K562 (cell line): ENCODE measurements at regions of chr1 and their contacts with region 1.

Region 1: GRCh38 chr1:157992031-157992832 is 1.2 kb upstream of the KIRREL1 start:
- DNase-seq: peak; percentile 58 to 67 (median 64)
- ATAC-seq: peak; percentile 90
- H3K4me3 ChIP-seq: no peak overlapping the region
- H3K27ac ChIP-seq: no peak overlapping the region
- H3K4me1 ChIP-seq: no peaks in the 10 kb centered on the region; a peak in 1 of 5 replicates
- H3K27me3 ChIP-seq: peaks cover 8 to 24% of the 10 kb centered on the region in 2 experiments; a peak in 3 of 5 replicates
- CTCF ChIP-seq: peak; percentile 81 to 88 (median 86)
- EP300 ChIP-seq: no peak
- POLR2A ChIP-seq: no peak
- RAD21 ChIP-seq: peak; percentile 80 to 87

Region 2: DNA sequence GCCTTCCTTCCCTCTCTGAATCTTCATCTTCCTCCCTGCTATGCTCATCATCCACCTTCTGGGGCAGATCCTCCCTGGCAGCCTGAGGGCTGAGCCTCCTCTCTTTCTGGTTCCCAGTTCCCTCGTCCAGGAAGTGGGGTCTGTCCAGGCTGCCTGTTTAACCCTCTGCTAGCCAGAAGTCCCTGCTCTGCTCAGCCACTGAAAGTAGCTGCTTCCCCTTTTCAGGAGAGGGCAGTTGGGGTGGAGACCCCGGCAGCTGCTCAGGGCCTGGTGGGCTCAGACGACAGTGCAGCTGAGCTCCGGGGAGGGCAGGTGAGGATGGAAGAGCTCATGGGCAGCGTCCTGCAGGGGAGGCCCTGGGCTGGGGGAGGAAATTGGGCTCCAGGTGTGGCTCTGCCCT is 811.0 kb before region 1 on chr1:
- CTCF ChIA-PET with region 1: no interaction called
- POLR2A ChIA-PET with region 1: no interaction called
- in situ Hi-C with region 1: no loop called
- intact Hi-C with region 1: no loop called
- DNase-seq: no peak
- ATAC-seq: no peak
- H3K4me3 ChIP-seq: no peak overlapping the region
- H3K27ac ChIP-seq: no peak overlapping the region
- H3K4me1 ChIP-seq: no peaks in the 10 kb centered on the region
- H3K27me3 ChIP-seq: peaks cover 14 to 63% of the 10 kb centered on the region in 2 experiments; a peak in 4 of 5 replicates
- CTCF ChIP-seq: no peak
- EP300 ChIP-seq: no peak
- POLR2A ChIP-seq: no peak
- RAD21 ChIP-seq: no peak

Region 3: DNA sequence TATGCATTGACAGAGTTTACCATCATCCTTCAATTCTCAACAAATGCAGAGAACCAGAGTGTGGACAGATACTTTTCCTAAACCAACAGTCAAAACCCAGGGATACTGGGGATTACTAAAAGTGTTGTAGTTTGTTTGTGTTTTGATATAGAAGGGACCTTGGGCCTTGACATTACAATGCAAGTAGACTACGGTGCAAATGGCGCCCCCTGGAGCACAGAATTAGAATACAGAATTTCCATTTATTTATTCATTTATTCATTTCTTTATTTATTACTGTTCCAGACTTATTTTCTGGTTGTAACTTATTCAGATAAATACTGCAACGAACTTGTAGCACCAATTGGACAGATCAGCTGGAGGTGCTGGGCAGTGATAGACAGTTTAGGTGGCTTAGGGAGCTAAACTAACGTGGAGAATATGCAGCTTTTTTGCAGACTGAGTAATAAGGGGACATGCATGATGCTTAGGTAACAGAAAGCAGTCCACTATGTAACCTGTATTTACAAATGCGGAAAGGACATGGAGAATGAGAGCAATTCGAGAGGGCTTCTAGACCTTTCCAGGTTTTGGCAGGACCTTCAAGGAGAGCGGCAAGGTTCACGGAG is 43.8 kb after region 1 on chr1:
- CTCF ChIA-PET with region 1: interaction called, 10 read pairs
- POLR2A ChIA-PET with region 1: interaction called, 4 read pairs
- in situ Hi-C with region 1: no loop called
- intact Hi-C with region 1: loop called (anchors 1 kb)
- DNase-seq: peak in 3 of 4 experiments; percentile 27 to 41 (median 38)
- ATAC-seq: no peak; the same call in 2 of the 3 replicates
- H3K4me3 ChIP-seq: no peak overlapping the region
- H3K27ac ChIP-seq: no peak overlapping the region
- H3K4me1 ChIP-seq: no peaks in the 10 kb centered on the region
- H3K27me3 ChIP-seq: peaks cover 6 to 33% of the 10 kb centered on the region in 2 experiments; a peak in 4 of 5 replicates
- CTCF ChIP-seq: peak; percentile 42 to 70 (median 67)
- EP300 ChIP-seq: no peak
- POLR2A ChIP-seq: no peak
- RAD21 ChIP-seq: peak; percentile 16 to 42; a peak in 2 of 4 replicates

Region 4: GRCh38 chr1:158087320-158087927 is 95.2 kb after region 1 on chr1:
- CTCF ChIA-PET with region 1: interaction called, 25 read pairs
- POLR2A ChIA-PET with region 1: interaction called, 3 read pairs
- in situ Hi-C with region 1: no loop called
- intact Hi-C with region 1: loop called (anchors 1 kb)
- DNase-seq: peak; percentile 79 to 89 (median 84)
- ATAC-seq: peak; percentile 99
- H3K4me3 ChIP-seq: no peak overlapping the region
- H3K27ac ChIP-seq: no peak overlapping the region
- H3K4me1 ChIP-seq: no peaks in the 10 kb centered on the region
- H3K27me3 ChIP-seq: peaks cover 13 to 31% of the 10 kb centered on the region in 2 experiments; a peak in 3 of 5 replicates
- CTCF ChIP-seq: peak; percentile 96 to 98 (median 98)
- EP300 ChIP-seq: no peak
- POLR2A ChIP-seq: no peak
- RAD21 ChIP-seq: peak; percentile 70 to 87